ENCODE measurements at regions of chr5 and their contacts with region 1.

Region 1: GRCh38 chr5:50751064-50751657 is 84.7 kb downstream of the PARP8 start:
- DNase-seq: peak; percentile 37
- H3K4me3 Mint-ChIP-seq: no peak overlapping the region
- H3K27ac Mint-ChIP-seq: no peak overlapping the region
- H3K4me1 Mint-ChIP-seq: peaks cover 42% of the 10 kb centered on the region
- H3K27me3 Mint-ChIP-seq: no peaks in the 10 kb centered on the region

Region 2: DNA sequence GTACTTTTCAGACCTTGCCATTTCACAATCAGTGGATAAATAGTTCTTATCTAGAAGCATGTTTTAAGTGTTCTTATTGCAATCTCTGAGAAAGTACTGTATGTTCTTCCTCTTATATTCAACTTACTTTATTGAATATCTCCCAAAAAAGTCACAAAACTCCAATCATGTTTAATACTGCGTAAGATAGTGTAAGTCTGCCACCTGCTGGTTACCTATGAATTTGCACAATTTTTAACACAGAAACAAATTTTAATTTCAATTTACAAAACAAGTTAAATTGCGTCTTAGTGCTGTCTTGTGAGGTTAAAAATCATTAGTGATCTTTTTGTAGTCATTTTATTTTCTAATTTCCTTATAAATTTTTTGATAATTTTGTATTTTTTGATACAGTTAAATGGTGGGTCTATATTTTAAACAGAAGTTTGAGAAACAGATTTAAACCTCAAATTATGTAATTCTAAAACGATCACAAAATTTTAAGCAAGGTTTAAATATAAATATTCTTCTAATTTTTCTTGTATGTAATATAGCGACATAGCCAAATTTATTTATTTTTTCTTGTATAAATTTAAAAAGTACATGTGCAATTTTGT is 425.8 kb before region 1 on chr5:
- CTCF ChIA-PET with region 1: no interaction called
- POLR2A ChIA-PET with region 1: no interaction called
- intact Hi-C with region 1: loop called (anchors 2 kb)
- DNase-seq: no peak
- H3K4me3 Mint-ChIP-seq: no peak overlapping the region
- H3K27ac Mint-ChIP-seq: no peak overlapping the region
- H3K4me1 Mint-ChIP-seq: peaks cover 13% of the 10 kb centered on the region
- H3K27me3 Mint-ChIP-seq: no peaks in the 10 kb centered on the region

Region 3: DNA sequence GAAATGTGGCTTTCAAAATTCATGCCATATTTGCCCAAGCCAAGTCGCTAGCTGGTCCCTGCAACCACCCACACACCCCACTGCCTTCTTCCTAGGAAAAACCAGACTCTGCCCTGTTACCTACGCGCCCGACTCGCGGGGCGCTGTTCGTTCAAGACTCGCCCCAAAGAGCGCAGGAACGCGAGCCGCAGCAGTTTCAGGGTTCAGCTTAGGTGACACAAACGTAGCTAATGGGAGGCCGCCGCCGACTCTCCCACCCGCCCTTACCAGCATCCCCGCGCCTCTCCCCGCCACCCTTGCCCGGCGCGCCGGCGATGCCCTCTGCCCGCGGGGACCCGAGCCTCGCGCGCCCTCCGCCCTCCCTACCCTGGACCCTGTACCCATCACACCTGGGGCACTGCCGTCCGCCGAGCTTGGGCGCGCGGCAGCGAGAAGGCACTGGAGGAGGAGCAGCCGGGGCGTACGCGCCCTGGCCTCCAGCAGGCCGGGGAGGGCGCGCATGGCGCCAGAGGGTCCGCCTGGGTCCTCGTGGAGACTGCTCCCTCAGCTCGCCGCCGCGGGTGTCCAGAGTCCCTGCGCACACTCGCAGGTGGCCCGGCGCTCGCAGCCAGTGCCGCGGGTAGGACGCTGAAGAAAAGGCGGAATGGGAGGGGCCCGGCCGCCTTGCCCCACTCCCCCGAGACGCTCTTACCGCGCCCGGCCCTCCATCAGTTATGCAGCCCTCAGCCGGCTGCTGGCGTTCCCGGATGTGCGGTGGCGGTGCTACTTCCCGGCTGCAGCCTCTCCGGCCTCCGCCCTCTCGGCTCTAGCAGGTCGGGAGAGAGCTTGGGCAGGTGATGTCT is 310.3 kb before region 1 on chr5 and contains the start of gene EMB:
- CTCF ChIA-PET with region 1: interaction called, 7 read pairs
- POLR2A ChIA-PET with region 1: no interaction called
- intact Hi-C with region 1: loop called (anchors 2 kb)
- DNase-seq: peak; percentile 89
- H3K4me3 Mint-ChIP-seq: peak within 1 kb of the TSS; percentile 92
- H3K27ac Mint-ChIP-seq: peak within 1 kb of the TSS; percentile 98
- H3K4me1 Mint-ChIP-seq: peaks cover 69% of the 10 kb centered on the region
- H3K27me3 Mint-ChIP-seq: no peaks in the 10 kb centered on the region
- total RNA-seq, gene EMB: 87.6 to 90.2 TPM

Region 4: GRCh38 chr5:50595199-50595598 is 156.0 kb before region 1 on chr5:
- CTCF ChIA-PET with region 1: no interaction called
- POLR2A ChIA-PET with region 1: no interaction called
- intact Hi-C with region 1: loop called (anchors 2 kb)
- DNase-seq: no peak
- H3K4me3 Mint-ChIP-seq: no peak overlapping the region
- H3K27ac Mint-ChIP-seq: peak overlapping the region; percentile 80
- H3K4me1 Mint-ChIP-seq: peaks cover 42% of the 10 kb centered on the region
- H3K27me3 Mint-ChIP-seq: no peaks in the 10 kb centered on the region

Region 5: GRCh38 chr5:50647726-50648125 is 103.4 kb before region 1 on chr5:
- CTCF ChIA-PET with region 1: no interaction called
- POLR2A ChIA-PET with region 1: no interaction called
- intact Hi-C with region 1: loop called (anchors 2 kb)
- DNase-seq: no peak
- H3K4me3 Mint-ChIP-seq: no peak overlapping the region
- H3K27ac Mint-ChIP-seq: no peak overlapping the region
- H3K4me1 Mint-ChIP-seq: no peaks in the 10 kb centered on the region
- H3K27me3 Mint-ChIP-seq: no peaks in the 10 kb centered on the region

Region 6: DNA sequence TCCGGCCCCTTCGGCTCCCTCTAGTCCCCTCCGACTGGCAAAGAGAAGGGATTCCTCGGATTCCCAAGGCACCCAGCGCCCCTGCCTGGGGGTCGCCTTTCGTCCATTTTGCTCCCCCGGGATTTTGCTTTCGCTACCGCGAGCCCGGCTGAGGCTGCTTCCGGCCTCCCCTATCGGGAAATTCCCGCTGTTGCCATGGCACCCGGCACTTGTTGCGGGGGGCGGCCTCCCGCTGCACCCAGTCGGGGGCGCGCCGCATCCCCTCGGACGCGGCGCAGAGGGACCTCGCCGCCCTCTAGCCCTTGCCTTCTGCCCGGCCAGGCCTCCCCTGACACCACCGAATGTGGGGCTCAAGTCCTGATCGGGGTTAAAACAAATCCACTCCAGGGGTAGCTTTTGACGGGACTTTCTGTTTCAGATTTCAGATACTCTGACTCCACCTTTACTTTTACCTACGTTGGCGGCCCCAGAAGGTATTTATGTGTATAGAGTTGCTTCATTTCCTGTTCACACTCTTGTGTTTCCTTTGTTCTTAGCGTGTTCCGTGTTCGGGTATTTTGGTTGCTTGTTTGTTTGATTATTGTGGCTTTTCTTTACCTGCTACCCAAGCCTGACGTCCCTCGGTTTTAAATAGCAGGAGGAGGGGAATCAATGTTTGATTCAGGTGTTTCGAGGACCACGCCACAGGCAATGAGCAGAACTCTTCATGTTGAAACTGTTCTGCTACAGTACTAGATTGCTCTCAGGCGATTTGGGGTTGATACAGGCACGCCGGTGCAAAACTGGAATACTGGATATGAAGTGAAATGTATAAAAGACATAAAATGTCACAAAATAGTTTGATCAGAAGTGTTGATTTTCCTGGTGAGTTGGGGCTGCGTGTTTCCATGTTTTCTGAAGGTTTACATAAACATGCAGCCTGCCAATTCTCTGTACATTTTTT is 83.2 kb before region 1 on chr5:
- CTCF ChIA-PET with region 1: interaction called, 3 read pairs
- POLR2A ChIA-PET with region 1: interaction called, 7 read pairs
- intact Hi-C with region 1: loop called (anchors 1 kb)
- DNase-seq: peak; percentile 90
- H3K4me3 Mint-ChIP-seq: peak overlapping the region; percentile 90
- H3K27ac Mint-ChIP-seq: peak overlapping the region; percentile 98
- H3K4me1 Mint-ChIP-seq: peaks cover 44% of the 10 kb centered on the region
- H3K27me3 Mint-ChIP-seq: no peaks in the 10 kb centered on the region

Region 7: DNA sequence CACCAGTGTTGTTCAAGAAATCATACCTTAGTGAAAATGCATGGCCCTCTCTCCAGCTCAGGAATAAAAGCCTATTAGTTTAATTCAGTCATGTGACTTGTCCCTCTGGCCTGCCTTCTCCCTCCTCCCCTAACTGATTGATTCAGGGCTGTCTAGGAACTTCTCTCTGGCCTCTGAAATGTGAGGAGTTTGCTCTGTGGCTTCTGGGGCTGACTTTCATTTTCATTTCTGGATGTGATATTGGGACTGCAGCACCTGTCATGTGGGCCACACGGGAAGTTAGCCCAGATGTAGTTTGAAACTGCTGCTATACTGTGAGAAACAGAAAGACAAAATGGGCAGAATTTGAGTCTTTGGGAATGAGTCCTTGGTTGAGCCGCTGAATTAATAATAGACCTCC is 39.9 kb before region 1 on chr5:
- CTCF ChIA-PET with region 1: interaction called, 3 read pairs
- POLR2A ChIA-PET with region 1: no interaction called
- intact Hi-C with region 1: loop called (anchors 1 kb)
- DNase-seq: peak; percentile 74
- H3K4me3 Mint-ChIP-seq: peak overlapping the region; percentile 54
- H3K27ac Mint-ChIP-seq: peak overlapping the region; percentile 60
- H3K4me1 Mint-ChIP-seq: peaks cover 81% of the 10 kb centered on the region
- H3K27me3 Mint-ChIP-seq: no peaks in the 10 kb centered on the region

Measured in activated CD4-positive, alpha-beta memory T cell treated with anti-CD3 and anti-CD28 coated beads for 36 hours (primary cell).